Ovary (tissue), 10 donors: ENCODE measurements at regions of chr2 and their contacts with region 1.

Region 1: GRCh38 chr2:73176881-73177644 is 25.3 kb upstream of the NOTO start:
- DNase-seq: peak; percentile 82 to 95 (median 92)
- H3K4me3 ChIP-seq: peak overlapping the region; percentile 42
- H3K27ac ChIP-seq: no peak overlapping the region
- H3K4me1 ChIP-seq: peaks cover 2% of the 10 kb centered on the region
- H3K27me3 ChIP-seq: no peaks in the 10 kb centered on the region
- CTCF ChIP-seq: peak; percentile 94 to 99 (median 98)
- EP300 ChIP-seq: no peak
- POLR2A ChIP-seq: no peak

Region 2: DNA sequence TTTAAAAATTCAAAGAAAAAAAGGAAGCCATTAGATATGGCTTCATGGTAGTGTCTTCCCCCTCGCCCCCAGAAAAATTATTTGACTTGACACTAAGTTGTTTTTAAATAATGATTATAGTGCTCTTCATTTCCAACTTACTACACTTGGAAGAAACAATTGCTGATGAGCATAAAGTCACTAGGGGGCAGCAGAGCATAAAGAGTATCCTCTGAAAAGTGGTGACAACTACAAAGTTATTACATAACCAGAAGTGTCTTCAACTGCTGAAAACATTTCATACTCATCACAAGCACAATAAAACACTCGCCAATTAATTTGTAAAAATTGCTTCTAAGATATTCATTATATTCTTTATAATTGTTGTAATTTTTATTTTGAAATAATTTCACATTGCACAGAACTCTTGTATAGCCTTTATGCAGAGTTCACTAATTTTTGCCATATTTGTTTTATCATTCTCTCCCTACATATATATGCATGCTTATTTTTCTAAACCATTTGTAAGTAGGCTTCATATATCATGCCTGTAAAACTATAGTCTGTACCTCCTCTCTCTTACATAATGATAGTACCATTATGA is 406.1 kb before region 1 on chr2:
- intact Hi-C with region 1: loop called in 1 of 4 experiments (anchors 10 kb)
- DNase-seq: peak in 3 of 5 donors; percentile 39 to 67 (median 43)
- H3K4me3 ChIP-seq: no peak overlapping the region
- H3K27ac ChIP-seq: no peak overlapping the region
- H3K4me1 ChIP-seq: no peaks in the 10 kb centered on the region
- H3K27me3 ChIP-seq: no peaks in the 10 kb centered on the region
- CTCF ChIP-seq: peak; percentile 53 to 81 (median 74)
- EP300 ChIP-seq: no peak
- POLR2A ChIP-seq: no peak

Region 3: DNA sequence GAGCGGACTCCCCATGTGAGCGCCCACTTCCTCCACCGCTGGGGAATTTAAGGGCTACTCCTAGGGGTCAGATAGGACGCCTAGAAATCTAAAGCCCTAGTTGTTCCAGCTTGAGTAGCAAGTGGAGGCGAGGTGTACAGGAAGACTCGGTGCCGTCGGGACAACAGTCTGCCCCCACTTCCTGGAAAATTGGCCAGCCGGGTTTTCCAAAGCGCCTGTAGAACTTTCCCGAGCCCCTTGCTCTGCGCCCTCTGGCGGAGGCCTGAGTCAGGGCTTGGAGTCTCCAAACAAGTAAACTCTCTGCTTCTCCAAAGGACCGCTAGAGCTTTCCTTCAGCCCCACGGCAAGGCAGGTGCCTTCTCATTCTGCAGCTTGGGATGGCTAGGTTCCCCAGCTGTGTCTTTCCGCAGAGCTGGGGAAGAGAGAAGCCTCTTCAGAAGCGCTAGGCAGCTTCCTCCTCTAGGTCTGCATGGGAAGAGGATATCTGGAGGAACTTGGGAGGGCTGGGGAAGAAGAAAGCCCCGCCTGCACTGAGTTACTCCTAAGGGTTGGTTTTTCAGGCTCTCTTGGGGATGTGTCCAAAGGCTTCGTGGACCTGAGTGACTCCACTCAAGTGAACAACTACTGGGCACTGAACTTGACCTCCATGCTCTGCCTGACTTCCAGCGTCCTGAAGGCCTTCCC is 289.2 kb before region 1 on chr2:
- intact Hi-C with region 1: loop called (anchors 5 to 10 kb)
- DNase-seq: peak; percentile 87 to 93 (median 90)
- H3K4me3 ChIP-seq: peak overlapping the region; percentile 47
- H3K27ac ChIP-seq: peak overlapping the region; percentile 74 to 79
- H3K4me1 ChIP-seq: peaks cover 7% of the 10 kb centered on the region
- H3K27me3 ChIP-seq: no peaks in the 10 kb centered on the region
- CTCF ChIP-seq: peak; percentile 68 to 80 (median 78)
- EP300 ChIP-seq: no peak
- POLR2A ChIP-seq: no peak

Region 4: DNA sequence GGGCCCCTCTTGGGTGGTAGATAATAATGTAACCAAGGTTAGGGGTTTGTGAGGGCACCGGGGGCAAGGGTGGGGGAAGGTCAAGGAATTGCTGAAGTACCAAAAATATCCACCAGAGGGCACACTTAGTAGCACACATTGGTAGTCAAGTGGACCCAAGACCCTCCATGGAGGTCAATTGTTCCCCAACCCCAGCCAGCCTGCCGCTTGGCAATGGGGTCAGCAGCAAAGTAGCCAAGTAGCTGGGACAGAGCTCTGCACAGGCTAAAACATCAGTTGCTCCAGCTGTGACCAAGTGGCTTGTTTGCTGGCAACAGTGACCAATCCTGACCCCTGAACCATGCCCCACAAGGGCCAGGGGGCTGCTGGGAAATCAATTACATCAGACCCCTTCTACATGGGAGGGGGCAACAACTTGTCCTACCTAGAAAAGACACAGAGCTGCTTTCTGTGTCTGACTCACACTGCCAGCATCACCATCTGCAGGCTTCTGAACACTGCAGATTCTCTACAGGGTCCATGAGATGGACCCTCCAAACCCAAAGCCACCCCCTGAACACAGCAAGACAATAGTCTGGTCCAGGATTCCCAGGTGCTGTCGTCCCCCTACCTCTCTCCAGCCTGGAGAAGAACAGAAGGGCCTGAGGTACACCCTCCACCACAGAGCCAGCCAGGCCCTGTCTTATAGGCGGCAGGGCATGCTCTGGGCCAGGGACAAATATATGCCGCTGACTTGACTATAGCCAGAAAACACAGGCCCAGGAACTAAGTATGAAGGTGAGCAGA is 183.7 kb before region 1 on chr2:
- intact Hi-C with region 1: loop called in 1 of 4 experiments (anchors 10 kb)
- DNase-seq: peak in 2 of 5 donors; percentile 7 to 23
- H3K4me3 ChIP-seq: no peak overlapping the region
- H3K27ac ChIP-seq: no peak overlapping the region
- H3K4me1 ChIP-seq: no peaks in the 10 kb centered on the region
- H3K27me3 ChIP-seq: no peaks in the 10 kb centered on the region
- CTCF ChIP-seq: peak; percentile 24 to 64 (median 36)
- EP300 ChIP-seq: no peak
- POLR2A ChIP-seq: no peak

Region 5: DNA sequence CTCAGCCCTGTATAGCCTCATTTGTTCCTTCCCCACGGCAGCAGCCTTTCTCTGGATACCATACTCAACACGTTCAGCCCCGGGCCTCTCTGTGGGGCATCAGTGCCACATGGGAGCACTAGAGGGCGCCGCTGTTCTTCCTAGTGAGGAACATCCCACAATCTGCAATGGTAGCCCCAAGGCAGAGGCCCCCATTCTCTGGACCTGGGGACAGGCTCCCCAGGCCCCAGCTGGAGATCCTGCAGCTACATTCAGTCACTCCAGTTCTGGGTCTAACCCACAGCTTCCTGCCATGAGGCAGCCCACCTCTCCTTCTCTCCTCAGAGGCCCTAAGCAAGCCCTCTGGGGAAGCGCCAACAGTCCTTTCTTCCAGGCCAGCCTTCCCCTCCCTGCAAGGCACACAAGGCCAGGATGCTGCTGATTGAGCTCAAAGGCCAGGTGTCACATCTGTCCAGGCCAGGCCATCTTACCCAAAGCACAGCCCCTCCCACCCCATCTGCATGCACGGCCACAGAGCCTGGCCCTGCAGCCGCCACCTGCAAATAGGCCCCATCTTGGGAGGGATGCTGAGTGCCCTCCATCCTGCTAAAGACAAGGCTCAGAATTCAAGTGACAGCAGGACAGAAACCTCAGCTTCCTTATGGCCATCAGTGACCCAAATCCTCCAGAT is 91.2 kb before region 1 on chr2:
- intact Hi-C with region 1: loop called in 1 of 4 experiments (anchors 5 kb)
- DNase-seq: peak; percentile 67 to 87 (median 82)
- H3K4me3 ChIP-seq: no peak overlapping the region
- H3K27ac ChIP-seq: no peak overlapping the region
- H3K4me1 ChIP-seq: no peaks in the 10 kb centered on the region
- H3K27me3 ChIP-seq: no peaks in the 10 kb centered on the region
- CTCF ChIP-seq: peak; percentile 56 to 64 (median 58)
- EP300 ChIP-seq: no peak
- POLR2A ChIP-seq: no peak

Region 6: DNA sequence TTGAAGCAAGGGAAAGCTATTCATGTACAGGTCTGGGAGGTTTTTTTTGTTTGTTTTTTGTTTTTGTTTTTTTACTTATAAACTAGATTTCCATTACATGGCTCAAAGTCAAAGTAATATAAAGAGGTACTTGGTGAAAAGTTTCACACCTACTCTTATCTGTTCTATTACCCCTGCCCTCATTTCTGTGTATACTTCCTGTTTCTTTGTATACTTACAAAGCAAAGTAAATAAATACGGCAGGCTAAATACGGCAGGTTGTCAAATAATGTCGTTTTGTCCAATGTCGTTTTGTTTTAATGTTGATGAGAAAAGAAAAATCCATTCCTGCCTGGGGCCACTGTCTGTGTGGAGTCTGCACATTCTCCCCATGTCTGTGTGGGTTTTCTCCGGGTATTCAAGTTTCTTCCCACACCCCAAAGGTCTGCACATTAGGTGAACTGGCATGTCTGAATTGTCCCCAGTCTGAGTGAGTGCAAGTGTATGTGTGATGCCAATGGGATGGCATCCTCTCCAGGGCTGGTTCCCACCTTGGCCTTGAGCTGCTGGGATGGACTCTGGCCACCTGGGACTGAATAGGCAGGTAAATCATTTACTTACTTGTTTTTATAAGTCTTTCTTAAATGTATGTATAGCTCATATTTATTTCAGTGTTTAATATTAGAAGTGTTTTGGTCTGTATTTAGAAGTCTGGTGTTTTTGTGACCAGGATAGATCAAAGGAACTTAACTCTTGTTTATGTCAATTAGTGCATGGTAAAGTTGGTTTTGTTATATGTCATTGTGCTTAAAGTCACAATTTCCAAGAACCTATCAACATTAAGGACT is 665.1 kb after region 1 on chr2:
- intact Hi-C with region 1: no loop called
- DNase-seq: no peak
- H3K4me3 ChIP-seq: no peak overlapping the region
- H3K27ac ChIP-seq: no peak overlapping the region
- H3K4me1 ChIP-seq: no peaks in the 10 kb centered on the region
- H3K27me3 ChIP-seq: no peaks in the 10 kb centered on the region
- CTCF ChIP-seq: no peak
- EP300 ChIP-seq: no peak
- POLR2A ChIP-seq: no peak